ENCODE measurements at regions of chr2 and their contacts with region 1.

Region 1: DNA sequence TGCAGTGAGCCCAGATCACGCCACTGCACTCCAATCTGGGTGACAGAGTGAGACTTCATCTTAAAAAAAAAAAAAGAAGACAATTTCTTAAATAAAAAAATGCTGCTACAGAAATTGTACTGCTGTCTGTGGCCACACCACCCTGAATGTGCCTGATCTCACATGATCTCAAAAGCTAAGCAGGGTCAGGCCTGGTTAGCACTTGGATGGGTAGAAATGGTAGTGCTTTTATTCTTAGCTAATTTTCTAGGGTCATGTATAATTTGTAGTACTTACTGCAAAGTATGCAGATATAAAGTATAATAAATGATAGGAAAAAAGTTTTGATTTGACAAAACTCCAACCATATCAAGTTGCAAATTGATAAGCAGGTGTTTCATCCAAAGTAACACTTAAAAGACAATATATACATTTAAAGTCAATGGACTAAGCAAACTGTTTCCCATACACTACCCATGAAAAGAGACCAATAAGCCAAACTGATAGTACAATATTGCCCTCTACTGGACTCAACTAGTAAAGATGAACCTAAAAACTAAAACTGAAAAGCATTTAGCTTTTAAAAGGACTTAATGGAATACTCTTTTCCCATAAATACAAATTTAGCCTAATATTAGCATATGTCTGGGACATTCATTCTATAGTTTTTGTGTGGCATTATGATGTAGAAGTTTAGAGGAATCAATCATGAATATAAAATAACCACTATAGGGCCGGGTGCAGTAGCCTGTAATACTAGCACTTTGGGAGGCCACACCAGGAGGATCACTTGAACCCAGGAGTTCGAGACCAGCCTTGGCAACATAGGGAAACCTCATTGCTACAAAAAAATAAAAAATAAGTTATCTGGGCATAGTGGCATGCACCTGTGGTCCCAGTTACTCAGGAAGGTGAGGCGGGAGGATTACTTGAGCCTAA is 18.6 kb upstream of the PEX13 start:
- DNase-seq: peak; percentile 70
- H3K4me3 ChIP-seq: no peak overlapping the region
- H3K27ac ChIP-seq: no peak overlapping the region
- H3K4me1 ChIP-seq: no peaks in the 10 kb centered on the region
- H3K27me3 ChIP-seq: no peaks in the 10 kb centered on the region
- CTCF ChIP-seq: peak; percentile 20 to 37
- POLR2A ChIP-seq: no peak

Region 2: DNA sequence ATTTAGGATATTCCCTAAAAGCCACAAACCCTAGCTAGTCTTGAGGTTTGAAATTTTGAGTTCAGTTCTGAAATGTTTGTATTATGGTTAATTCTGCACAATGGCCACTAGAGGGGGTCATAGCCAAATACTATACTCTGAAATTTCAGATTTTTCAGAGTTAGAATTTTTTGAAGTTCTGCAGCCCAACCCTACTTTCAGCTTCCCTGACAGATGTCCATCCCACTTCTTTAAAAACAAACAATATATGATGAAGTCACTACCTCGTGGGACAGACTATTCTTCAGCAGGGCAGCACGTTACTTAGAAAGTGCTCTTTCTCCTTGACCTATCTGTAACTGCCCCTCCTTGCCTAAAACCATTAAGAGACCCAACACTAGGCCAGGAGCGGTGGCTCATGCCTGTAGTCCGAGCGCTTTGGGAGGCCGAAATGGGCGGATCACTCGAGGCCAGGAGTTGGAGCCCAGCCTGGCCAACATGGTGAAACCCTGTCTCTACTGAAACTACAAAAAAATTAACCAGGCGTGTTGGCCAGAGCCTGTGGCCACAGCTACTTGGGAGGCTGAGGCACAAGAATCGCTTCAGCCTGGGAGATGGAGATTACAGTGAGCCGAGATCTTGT is 291.0 kb before region 1 on chr2:
- CTCF ChIA-PET with region 1: interaction called, 173 read pairs
- POLR2A ChIA-PET with region 1: no interaction called
- dilution Hi-C with region 1: no loop called
- intact Hi-C with region 1: loop called (anchors 1 kb)
- DNase-seq: peak; percentile 44
- H3K4me3 ChIP-seq: no peak overlapping the region
- H3K27ac ChIP-seq: no peak overlapping the region
- H3K4me1 ChIP-seq: peaks cover 5% of the 10 kb centered on the region
- H3K27me3 ChIP-seq: no peaks in the 10 kb centered on the region
- CTCF ChIP-seq: peak; percentile 48 to 52
- POLR2A ChIP-seq: no peak

Region 3: DNA sequence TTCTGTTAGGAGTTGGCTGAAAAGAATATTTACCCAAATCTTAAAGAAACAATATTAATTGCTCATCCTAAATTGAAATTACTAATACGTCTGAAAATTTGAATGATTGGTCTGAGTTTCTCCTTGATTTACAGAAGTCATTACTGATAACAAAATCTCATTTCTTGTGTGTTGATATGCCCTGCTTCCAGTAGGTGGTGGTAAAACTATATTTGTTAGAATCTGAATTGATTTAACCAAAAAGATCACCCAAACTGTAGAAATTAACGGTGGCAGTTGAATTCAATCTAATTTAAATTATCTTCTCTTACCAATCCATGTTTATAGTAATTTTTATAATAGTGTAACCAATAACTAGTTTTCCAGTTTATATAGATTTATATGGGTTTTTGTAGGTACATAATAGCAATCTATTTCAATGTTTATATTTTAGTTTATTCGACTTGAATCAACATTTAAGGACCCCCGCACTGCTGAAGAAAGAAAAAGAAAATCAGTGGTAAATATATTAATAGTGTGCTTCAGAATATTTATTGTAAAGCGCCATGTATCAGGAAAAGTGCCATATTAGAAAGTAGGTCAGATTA is 204.5 kb before region 1 on chr2:
- CTCF ChIA-PET with region 1: interaction called, 98 read pairs
- POLR2A ChIA-PET with region 1: no interaction called
- dilution Hi-C with region 1: no loop called
- intact Hi-C with region 1: loop called (anchors 1 kb)
- DNase-seq: peak; percentile 46
- H3K4me3 ChIP-seq: no peak overlapping the region
- H3K27ac ChIP-seq: no peak overlapping the region
- H3K4me1 ChIP-seq: peaks cover 21% of the 10 kb centered on the region
- H3K27me3 ChIP-seq: no peaks in the 10 kb centered on the region
- CTCF ChIP-seq: peak; percentile 23 to 25
- POLR2A ChIP-seq: no peak

Region 4: GRCh38 chr2:60818272-60818671 is 180.6 kb before region 1 on chr2:
- CTCF ChIA-PET with region 1: interaction called, 49 read pairs
- POLR2A ChIA-PET with region 1: no interaction called
- dilution Hi-C with region 1: no loop called
- intact Hi-C with region 1: loop called (anchors 1 kb)
- DNase-seq: peak; percentile 37
- H3K4me3 ChIP-seq: no peak overlapping the region
- H3K27ac ChIP-seq: no peak overlapping the region
- H3K4me1 ChIP-seq: no peaks in the 10 kb centered on the region
- H3K27me3 ChIP-seq: peaks cover 0 to 1% of the 10 kb centered on the region in 2 experiments
- CTCF ChIP-seq: peak; percentile 16 to 25
- POLR2A ChIP-seq: no peak

Region 5: GRCh38 chr2:60899230-60899891 is 99.5 kb before region 1 on chr2:
- CTCF ChIA-PET with region 1: interaction called, 10 read pairs
- POLR2A ChIA-PET with region 1: no interaction called
- dilution Hi-C with region 1: no loop called
- intact Hi-C with region 1: no loop called
- DNase-seq: peak; percentile 44
- H3K4me3 ChIP-seq: no peak overlapping the region
- H3K27ac ChIP-seq: no peak overlapping the region
- H3K4me1 ChIP-seq: no peaks in the 10 kb centered on the region
- H3K27me3 ChIP-seq: no peaks in the 10 kb centered on the region
- CTCF ChIP-seq: no peak
- POLR2A ChIP-seq: no peak

Region 6: GRCh38 chr2:60966507-60967405 is 32.1 kb before region 1 on chr2:
- CTCF ChIA-PET with region 1: interaction called, 14 read pairs
- POLR2A ChIA-PET with region 1: no interaction called
- dilution Hi-C with region 1: no loop called
- intact Hi-C with region 1: no loop called
- DNase-seq: no peak
- H3K4me3 ChIP-seq: no peak overlapping the region
- H3K27ac ChIP-seq: no peak overlapping the region
- H3K4me1 ChIP-seq: no peaks in the 10 kb centered on the region
- H3K27me3 ChIP-seq: no peaks in the 10 kb centered on the region
- CTCF ChIP-seq: no peak
- POLR2A ChIP-seq: no peak

Region 7: DNA sequence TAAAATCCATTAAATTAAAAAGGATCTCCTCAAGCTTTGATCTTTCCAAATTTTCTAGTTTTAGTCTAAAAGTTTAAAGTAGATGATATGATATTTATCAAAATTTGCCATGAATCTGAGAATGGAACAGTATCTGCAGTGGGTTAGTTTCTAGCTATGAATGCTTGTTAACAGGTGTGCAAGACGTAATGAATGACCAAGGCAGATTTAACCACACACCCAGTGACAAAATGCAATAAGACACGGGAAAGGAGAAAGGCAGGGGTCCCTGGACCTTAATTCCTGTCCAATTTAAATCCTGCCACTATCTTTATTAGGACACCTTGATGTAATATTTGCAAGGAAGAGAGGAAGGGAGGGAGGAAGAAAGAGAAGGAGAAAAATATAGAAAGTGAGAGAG is 11.8 kb before region 1 on chr2:
- CTCF ChIA-PET with region 1: interaction called, 12 read pairs
- POLR2A ChIA-PET with region 1: no interaction called
- dilution Hi-C with region 1: no loop called
- intact Hi-C with region 1: no loop called
- DNase-seq: no peak
- H3K4me3 ChIP-seq: no peak overlapping the region
- H3K27ac ChIP-seq: no peak overlapping the region
- H3K4me1 ChIP-seq: no peaks in the 10 kb centered on the region
- H3K27me3 ChIP-seq: no peaks in the 10 kb centered on the region
- CTCF ChIP-seq: no peak
- POLR2A ChIP-seq: no peak